ENCODE measurements at regions of chr2 and their contacts with region 1.

Region 1: GRCh38 chr2:135620198-135620597 is 88.9 kb downstream of the R3HDM1 start:
- DNase-seq: no peak
- H3K4me3 Mint-ChIP-seq: no peak overlapping the region
- H3K27ac Mint-ChIP-seq: peak overlapping the region; percentile 12
- H3K4me1 Mint-ChIP-seq: peaks cover 9% of the 10 kb centered on the region
- H3K27me3 Mint-ChIP-seq: no peaks in the 10 kb centered on the region

Region 2: GRCh38 chr2:135637456-135638087 is 17.4 kb after region 1 on chr2:
- intact Hi-C with region 1: loop called (anchors 2 kb)
- DNase-seq: no peak
- H3K4me3 Mint-ChIP-seq: no peak overlapping the region
- H3K27ac Mint-ChIP-seq: peak overlapping the region; percentile 70
- H3K4me1 Mint-ChIP-seq: peaks cover 12% of the 10 kb centered on the region
- H3K27me3 Mint-ChIP-seq: no peaks in the 10 kb centered on the region

Measured in activated T-helper 1 cell treated with anti-CD3 and anti-CD28 coated beads, Interleukin-12 subunit alpha, Interleukin-12 subunit beta, Interleukin-2, Interleukin-4 antibody, amounts not matched to agents 30 ng/mL and 10 ng/mL and 1 ng/mL, durations not matched to agents 14 hours and 24 hours and 36 hours (primary cell).